Heart right ventricle (tissue), 16 donors: ENCODE measurements at regions of chr2 and their contacts with region 1.

Region 1: GRCh38 chr2:169528271-169528701 is 18.8 kb downstream of the KLHL41 start:
- DNase-seq: peak; percentile 41 to 49
- ATAC-seq: peak in 7 of 8 donors; percentile 64 to 83 (median 71)
- H3K4me3 ChIP-seq: no peak overlapping the region
- H3K27ac ChIP-seq: no peak overlapping the region
- H3K4me1 ChIP-seq: no peaks in the 10 kb centered on the region
- H3K27me3 ChIP-seq: no peaks in the 10 kb centered on the region
- CTCF ChIP-seq: peak; percentile 57 to 91 (median 88)

Region 2: GRCh38 chr2:169507698-169508097 is 20.6 kb before region 1 on chr2:
- intact Hi-C with region 1: no loop called
- DNase-seq: no peak
- ATAC-seq: no peak
- H3K4me3 ChIP-seq: no peak overlapping the region
- H3K27ac ChIP-seq: peak overlapping the region in 1 of 10 donors; percentile 21
- H3K4me1 ChIP-seq: peaks cover 0 to 17% (median 4%) of the 10 kb centered on the region in 9 donors
- H3K27me3 ChIP-seq: no peaks in the 10 kb centered on the region
- CTCF ChIP-seq: no peak

Region 3: DNA sequence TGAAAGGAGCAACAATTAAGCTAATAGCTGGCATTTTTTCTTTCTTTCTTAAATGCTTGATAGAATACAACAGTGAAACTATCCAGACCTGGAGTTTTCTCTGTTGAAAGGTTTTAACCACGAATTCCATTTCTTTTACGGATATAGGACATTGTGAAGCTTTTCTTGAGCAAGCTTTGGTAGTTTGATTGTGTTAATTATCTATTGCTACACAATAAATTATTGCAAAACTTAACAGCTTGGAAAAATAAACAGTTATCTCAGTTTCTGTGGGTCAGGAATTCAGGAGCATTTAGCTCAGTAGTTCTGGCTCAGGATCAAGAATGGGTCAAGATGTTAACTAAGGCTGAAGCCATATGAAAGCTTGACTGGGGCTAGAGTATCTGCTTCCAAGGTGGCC is 177.6 kb after region 1 on chr2:
- intact Hi-C with region 1: no loop called
- DNase-seq: no peak
- ATAC-seq: peak in 3 of 8 donors; percentile 18 to 65 (median 51)
- H3K4me3 ChIP-seq: no peak overlapping the region
- H3K27ac ChIP-seq: no peak overlapping the region
- H3K4me1 ChIP-seq: peaks cover 0 to 4% (median 0%) of the 10 kb centered on the region in 9 donors
- H3K27me3 ChIP-seq: no peaks in the 10 kb centered on the region
- CTCF ChIP-seq: no peak

Region 4: DNA sequence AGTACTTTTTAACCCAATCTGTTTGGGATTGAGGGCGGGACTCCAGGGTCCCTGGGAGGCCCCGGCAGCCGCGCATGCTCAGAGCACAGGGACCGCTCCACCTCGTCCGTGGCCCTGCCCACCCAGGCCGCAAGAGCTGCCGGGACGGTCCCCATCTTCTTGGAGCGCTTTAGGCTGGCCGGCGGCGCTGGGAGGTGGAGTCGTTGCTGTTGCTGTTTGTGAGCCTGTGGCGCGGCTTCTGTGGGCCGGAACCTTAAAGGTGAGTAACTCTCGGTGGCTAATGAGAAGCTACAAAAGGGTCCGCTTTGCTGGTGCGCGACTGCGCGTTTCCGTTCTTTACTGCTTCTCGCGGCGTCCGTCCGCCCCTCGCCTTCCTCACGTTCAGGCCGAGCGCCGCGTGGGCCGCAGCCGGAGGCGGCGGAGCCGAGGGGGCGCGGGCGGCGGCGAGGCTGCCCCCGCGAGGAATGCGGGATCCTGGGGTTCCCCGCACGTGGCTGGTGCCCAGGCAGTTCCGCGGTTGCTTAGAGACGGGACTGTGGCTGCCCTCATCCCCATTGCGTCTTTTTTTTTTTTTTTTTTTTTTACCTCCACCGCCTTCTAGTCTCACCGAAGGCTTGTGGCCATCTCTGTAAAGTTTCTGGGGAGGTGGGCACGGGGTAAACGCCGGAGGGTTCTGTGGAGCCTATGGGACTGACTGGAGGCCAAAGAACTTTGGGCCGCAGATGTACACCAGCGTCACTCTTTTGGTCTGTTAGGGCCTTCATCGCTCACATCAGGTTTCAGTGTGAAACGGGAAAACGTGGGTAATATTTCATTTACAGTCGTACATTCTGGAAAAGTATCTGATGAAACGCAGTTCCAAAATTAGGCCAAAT is 270.7 kb after region 1 on chr2 and contains the start of gene SSB:
- intact Hi-C with region 1: loop called in 2 of 10 experiments (anchors 10 kb)
- DNase-seq: peak; percentile 93 to 96
- ATAC-seq: peak; percentile 99 to 100 (median 100)
- H3K4me3 ChIP-seq: peak within 1 kb of the TSS; percentile 63 to 95 (median 84)
- H3K27ac ChIP-seq: peak within 1 kb of the TSS; percentile 39 to 90 (median 86)
- H3K4me1 ChIP-seq: peaks cover 0 to 33% (median 18%) of the 10 kb centered on the region in 9 donors
- H3K27me3 ChIP-seq: no peaks in the 10 kb centered on the region
- CTCF ChIP-seq: peak in 1 of 9 donors; percentile 14
- total RNA-seq, gene SSB: 45.7 to 66.3 (median 55.3) TPM

Region 5: GRCh38 chr2:169928463-169928864 is 400.2 kb after region 1 on chr2:
- intact Hi-C with region 1: loop called in 1 of 10 experiments (anchors 10 kb)
- DNase-seq: peak in 1 of 2 donors; percentile 8
- ATAC-seq: peak in 1 of 8 donors; percentile 38
- H3K4me3 ChIP-seq: no peak overlapping the region
- H3K27ac ChIP-seq: no peak overlapping the region
- H3K4me1 ChIP-seq: peaks cover 0 to 3% (median 0%) of the 10 kb centered on the region in 9 donors
- H3K27me3 ChIP-seq: no peaks in the 10 kb centered on the region
- CTCF ChIP-seq: peak; percentile 56 to 82 (median 72)